K562 (cell line): ENCODE measurements at regions of chr1 and their contacts with region 1.

Region 1: DNA sequence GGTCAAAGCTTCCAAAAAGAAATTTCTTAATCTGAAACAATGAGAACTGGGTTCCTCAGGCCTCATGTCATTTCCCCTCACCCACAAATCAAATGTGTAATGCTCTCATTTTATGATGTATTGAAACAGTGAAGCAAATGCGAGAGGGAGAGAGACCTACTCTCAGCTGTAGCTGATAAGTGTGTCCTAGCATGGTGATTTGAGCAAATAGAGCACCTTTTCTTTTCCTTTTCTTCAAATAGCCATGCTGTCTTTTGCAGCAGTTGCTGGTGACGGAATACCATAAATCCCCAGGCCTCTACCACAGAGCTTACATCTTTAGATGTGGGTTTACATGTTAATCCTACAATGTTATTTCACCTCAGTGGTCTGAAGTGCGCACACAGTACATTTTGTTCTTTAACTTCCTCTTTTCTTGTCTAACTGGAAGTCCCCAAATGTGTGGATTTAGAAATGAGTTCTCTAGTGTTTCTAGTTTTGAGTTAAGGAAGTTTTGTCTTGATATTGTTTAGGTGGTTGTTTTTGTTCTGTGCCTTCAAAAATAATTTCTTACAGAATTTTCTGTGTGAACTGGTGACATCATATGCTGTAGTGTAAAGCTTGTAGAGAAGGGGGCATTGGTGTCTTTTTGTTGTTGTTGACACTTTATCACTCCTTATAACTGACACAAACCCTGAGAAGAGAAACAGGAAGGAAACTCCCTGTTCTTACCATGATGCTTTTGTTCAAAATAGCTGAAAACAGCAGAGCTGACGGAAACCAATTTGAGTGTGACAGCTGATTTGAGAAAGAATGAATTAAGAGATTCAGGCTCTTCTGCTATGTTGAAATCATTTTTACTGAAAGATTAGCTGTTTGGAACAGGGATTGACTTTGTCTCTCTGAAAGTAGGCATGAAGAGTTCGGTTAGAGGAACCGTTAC is 12.2 kb downstream of the SMAP2 start:
- DNase-seq: peak in 1 of 4 experiments; percentile 60
- ATAC-seq: peak; percentile 13
- H3K4me3 ChIP-seq: peak overlapping the region; percentile 29; the same call in 1 of the 2 replicates
- H3K27ac ChIP-seq: peak overlapping the region; percentile 95
- H3K4me1 ChIP-seq: peaks cover 37 to 75% of the 10 kb centered on the region in 2 experiments
- H3K27me3 ChIP-seq: no peaks in the 10 kb centered on the region
- CTCF ChIP-seq: no peak
- EP300 ChIP-seq: no peak
- POLR2A ChIP-seq: no peak
- RAD21 ChIP-seq: no peak

Region 2: GRCh38 chr1:40373338-40374283 is 12.1 kb before region 1 on chr1 and contains the start of gene SMAP2:
- CTCF ChIA-PET with region 1: no interaction called
- POLR2A ChIA-PET with region 1: interaction called, 24 read pairs
- in situ Hi-C with region 1: no loop called
- intact Hi-C with region 1: no loop called
- DNase-seq: peak; percentile 99 to 100 (median 100)
- ATAC-seq: peak; percentile 90
- H3K4me3 ChIP-seq: peak within 1 kb of the TSS; percentile 97
- H3K27ac ChIP-seq: peak within 1 kb of the TSS; percentile 75
- H3K4me1 ChIP-seq: peaks cover 18 to 30% of the 10 kb centered on the region in 2 experiments
- H3K27me3 ChIP-seq: no peaks in the 10 kb centered on the region
- CTCF ChIP-seq: no peak
- EP300 ChIP-seq: no peak
- POLR2A ChIP-seq: peak; percentile 79
- RAD21 ChIP-seq: no peak
- polyA plus RNA-seq, gene SMAP2: 38.7 to 47.3 TPM

Region 3: DNA sequence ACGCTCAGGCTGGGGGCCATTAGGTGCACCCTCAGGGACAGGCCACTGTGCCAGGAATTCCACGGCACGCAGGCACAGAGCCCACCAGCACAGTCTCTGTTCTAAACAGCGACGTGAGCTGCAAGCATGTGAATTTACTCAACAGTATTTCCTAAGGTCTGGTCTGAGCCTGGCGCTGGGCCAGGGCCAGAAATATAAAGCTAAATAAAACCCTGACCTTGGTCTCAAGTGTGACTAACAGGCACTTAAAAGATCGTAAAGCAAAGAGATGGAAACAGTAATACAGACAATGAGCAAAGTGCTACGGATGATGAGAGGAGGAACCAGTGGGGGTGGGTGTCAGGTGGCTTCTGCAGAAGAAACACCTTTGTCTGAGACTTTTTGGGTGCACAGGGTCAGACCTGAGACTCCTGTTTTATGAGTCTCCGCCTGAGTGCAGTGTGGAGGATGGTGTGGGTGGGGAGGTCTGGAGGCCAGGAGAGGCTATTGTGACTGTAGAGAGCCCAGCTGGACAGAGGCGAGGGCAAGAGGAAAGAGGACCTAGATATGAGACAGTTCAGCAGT is 1152.2 kb after region 1 on chr1:
- CTCF ChIA-PET with region 1: no interaction called
- POLR2A ChIA-PET with region 1: no interaction called
- in situ Hi-C with region 1: no loop called
- intact Hi-C with region 1: no loop called
- DNase-seq: no peak
- ATAC-seq: no peak
- H3K4me3 ChIP-seq: no peak overlapping the region
- H3K27ac ChIP-seq: no peak overlapping the region
- H3K4me1 ChIP-seq: peaks cover 3 to 10% of the 10 kb centered on the region in 2 experiments; a peak in 3 of 5 replicates
- H3K27me3 ChIP-seq: peaks cover 22 to 73% of the 10 kb centered on the region in 2 experiments
- CTCF ChIP-seq: no peak
- EP300 ChIP-seq: no peak
- POLR2A ChIP-seq: no peak
- RAD21 ChIP-seq: no peak